ENCODE measurements at regions of chr16 and their contacts with region 1.

Region 1: GRCh38 chr16:30844671-30845449 is 49.0 kb downstream of the BCL7C start:
- DNase-seq: peak; percentile 74
- H3K4me3 Mint-ChIP-seq: no peak overlapping the region
- H3K27ac Mint-ChIP-seq: peak overlapping the region; percentile 40
- H3K4me1 Mint-ChIP-seq: peaks cover 10% of the 10 kb centered on the region
- H3K27me3 Mint-ChIP-seq: no peaks in the 10 kb centered on the region

Region 2: DNA sequence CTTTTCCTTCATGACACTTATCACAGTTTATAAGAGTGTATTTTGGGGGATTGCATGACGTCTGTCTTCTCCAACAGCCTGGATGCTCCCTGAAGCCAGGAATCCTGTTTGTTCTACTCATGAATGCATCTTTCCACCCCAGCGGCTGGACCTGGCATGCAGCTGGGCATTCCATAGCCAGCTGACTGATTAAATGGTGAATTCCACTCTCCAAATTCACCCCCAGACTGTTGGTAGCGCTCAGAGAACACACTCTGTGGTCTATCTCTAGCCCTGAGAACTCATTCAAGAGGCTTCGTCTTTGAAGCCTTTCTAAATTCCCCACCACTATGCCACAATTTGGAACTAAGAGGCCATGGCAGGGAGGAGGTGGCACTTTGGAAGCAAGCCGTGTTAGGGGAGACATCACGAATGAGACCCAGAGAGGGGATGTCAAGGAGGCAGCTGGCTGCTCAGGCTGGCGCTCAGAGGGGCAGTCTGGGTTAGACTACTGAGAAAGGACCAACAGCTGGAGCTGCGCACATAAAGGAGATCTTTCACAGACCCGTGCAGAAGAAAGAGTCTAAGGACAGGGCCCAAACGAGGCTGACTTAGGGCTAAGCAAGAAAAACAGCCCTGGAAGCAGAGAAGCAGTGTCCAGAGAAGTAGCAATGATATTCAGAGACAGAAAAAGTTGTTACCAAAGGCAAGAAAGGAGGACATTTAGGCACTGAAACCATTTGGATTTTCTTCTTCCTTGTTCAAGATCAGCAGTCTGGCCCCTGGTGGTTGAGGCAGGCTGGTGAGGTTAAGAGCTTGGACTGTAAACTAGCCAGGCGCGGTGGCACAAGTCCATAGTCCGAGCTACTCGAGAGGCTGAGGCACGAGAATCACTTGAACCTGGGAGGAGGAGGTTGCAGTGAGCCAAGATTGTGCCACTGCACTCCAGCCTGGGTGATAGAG is 15.5 kb before region 1 on chr16:
- intact Hi-C with region 1: no loop called
- DNase-seq: no peak
- H3K4me3 Mint-ChIP-seq: no peak overlapping the region
- H3K27ac Mint-ChIP-seq: no peak overlapping the region
- H3K4me1 Mint-ChIP-seq: no peaks in the 10 kb centered on the region
- H3K27me3 Mint-ChIP-seq: peaks cover 8% of the 10 kb centered on the region

Region 3: GRCh38 chr16:30941600-30942425 is 97.0 kb after region 1 on chr16:
- intact Hi-C with region 1: loop called (anchors 1 kb)
- DNase-seq: peak; percentile 70
- H3K4me3 Mint-ChIP-seq: peak overlapping the region; percentile 60
- H3K27ac Mint-ChIP-seq: peak overlapping the region; percentile 69
- H3K4me1 Mint-ChIP-seq: peaks cover 23% of the 10 kb centered on the region
- H3K27me3 Mint-ChIP-seq: no peaks in the 10 kb centered on the region